ENCODE measurements at regions of chr13 and their contacts with region 1.

Region 1: DNA sequence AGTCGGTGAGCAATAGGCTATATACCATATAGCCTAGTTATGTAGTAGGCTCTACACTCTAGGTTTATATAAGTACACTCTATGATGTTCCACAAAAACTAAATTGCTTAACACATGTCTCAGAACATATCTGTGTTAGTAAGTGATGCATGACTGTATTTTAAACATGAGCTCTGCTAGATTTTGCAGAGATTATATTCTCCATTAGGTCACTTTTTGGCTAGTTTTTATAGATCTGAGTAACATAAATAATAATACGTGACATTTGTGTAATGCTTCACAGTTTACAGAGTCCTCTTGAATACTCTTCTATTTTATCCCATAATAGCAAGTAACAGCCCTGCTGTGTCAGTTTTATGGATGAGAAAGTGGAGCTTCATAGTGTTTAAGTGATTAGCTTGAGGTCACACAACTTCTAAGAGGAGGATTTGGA is 47.8 kb downstream of the NDFIP2 start:
- DNase-seq: no peak
- H3K4me3 Mint-ChIP-seq: no peak overlapping the region
- H3K27ac Mint-ChIP-seq: no peak overlapping the region
- H3K4me1 Mint-ChIP-seq: peaks cover 20% of the 10 kb centered on the region
- H3K27me3 Mint-ChIP-seq: no peaks in the 10 kb centered on the region

Region 2: DNA sequence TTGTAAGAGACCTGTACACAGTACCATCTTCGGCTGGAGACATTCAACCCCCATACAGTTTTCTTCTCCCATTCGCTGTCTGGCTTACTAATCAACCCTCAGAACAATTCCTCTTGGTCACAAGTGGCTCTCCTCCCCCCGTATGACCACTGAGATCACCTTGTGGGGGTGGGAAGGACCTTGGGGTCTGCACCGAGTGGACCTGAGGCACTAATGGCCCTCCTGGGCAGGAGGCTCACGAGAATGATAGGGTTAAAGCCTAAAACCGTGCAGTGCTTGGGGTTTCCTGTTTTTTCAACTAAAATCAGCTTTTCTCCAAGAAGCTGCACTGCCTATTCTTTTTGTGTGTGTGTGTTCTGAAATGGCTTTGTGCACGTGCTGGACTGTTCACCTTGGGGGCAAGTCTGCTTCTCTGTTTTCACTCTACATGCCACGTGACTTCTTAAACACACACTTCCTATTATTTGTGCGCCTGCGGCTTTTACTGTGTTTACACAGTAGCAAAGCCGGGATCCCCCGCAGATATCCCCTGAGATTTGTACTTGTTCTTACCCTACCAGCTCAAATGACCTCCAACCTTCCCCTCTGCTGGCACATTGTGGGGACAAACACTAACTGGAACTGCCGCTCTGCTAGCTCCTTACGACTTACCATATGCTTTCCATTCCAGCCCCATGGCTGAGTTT is 135.1 kb before region 1 on chr13:
- CTCF ChIA-PET with region 1: no interaction called
- intact Hi-C with region 1: no loop called
- DNase-seq: peak; percentile 45
- H3K4me3 Mint-ChIP-seq: peak overlapping the region; percentile 50
- H3K27ac Mint-ChIP-seq: peak overlapping the region; percentile 60
- H3K4me1 Mint-ChIP-seq: peaks cover 64% of the 10 kb centered on the region
- H3K27me3 Mint-ChIP-seq: no peaks in the 10 kb centered on the region

Region 3: DNA sequence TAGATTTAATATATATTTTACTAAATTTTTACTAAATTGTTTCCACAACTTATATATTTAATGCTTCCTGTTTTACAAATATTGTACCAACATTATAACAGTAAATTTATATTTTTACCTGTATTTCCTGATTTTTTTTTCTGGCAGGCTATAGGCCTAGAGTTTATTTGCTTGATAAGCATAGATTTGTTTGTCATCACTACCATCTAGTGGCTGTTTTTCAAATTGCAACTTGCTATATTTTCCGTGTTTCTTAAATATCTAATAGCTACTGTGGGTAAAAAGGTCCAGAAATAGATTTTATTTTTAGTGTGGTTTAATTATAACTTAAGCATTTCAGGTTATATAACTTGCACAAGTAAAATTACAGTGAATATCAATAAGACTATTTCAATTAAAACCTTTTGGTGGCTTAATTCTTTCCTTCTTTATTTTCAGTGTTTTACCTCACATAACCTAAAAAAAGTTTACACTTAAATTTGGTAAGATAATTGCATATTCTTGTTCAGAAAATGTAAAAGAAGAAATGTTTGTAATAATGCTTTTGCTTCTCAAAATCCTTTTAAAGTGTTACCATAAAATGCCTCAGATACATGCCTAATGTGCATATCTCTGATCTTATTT is 12.8 kb after region 1 on chr13:
- CTCF ChIA-PET with region 1: interaction called, 15 read pairs
- intact Hi-C with region 1: no loop called
- DNase-seq: no peak
- H3K4me3 Mint-ChIP-seq: no peak overlapping the region
- H3K27ac Mint-ChIP-seq: no peak overlapping the region
- H3K4me1 Mint-ChIP-seq: peaks cover 5% of the 10 kb centered on the region
- H3K27me3 Mint-ChIP-seq: no peaks in the 10 kb centered on the region

Measured in activated naive CD4-positive, alpha-beta T cell treated with anti-CD3 and anti-CD28 coated beads for 36 hours (primary cell).